ENCODE measurements at regions of chr9 and their contacts with region 1.

Region 1: GRCh38 chr9:35510745-35511428 is 21.0 kb downstream of the RUSC2 start:
- DNase-seq: peak; percentile 79 to 97
- ATAC-seq: peak; percentile 95 to 96
- H3K4me3 ChIP-seq: peak overlapping the region; percentile 8; the same call in 2 of the 3 replicates
- H3K27ac ChIP-seq: peak overlapping the region; percentile 95 to 96
- H3K4me1 ChIP-seq: peaks cover 78% of the 10 kb centered on the region
- CTCF ChIP-seq: peak; percentile 40
- EP300 ChIP-seq: peak; percentile 91 to 97; a peak in 4 of 5 replicates
- POLR2A ChIP-seq: no peak
- RAD21 ChIP-seq: peak; percentile 60 to 71

Region 2: DNA sequence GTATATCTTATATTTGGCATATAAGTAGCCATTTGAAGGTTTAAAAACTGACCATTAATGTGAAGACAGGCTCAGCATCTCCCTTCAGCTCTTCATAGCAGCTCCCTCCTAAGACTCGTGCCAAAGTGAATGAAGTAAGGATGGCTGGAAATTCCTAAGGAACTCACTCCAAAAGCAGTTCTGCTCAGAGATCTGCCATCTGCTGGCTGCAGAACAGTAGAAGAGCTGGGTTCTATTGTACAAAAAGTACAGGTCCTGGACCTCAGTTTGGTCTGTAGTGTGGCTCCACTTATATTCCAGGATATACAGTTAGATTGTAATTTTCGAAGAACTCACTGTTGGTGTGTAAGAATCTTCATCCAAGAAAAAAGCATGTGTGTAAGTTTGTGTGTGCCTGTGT is 125.8 kb before region 1 on chr9:
- CTCF ChIA-PET with region 1: no interaction called
- POLR2A ChIA-PET with region 1: no interaction called
- DNase-seq: peak in 1 of 2 experiments; percentile 9
- ATAC-seq: peak; percentile 47 to 56; a peak in 2 of 6 replicates
- H3K4me3 ChIP-seq: no peak overlapping the region
- H3K27ac ChIP-seq: no peak overlapping the region
- H3K4me1 ChIP-seq: no peaks in the 10 kb centered on the region
- CTCF ChIP-seq: 0 out of 3 replicates have a peak, but pooled peaks have one; percentile 9
- EP300 ChIP-seq: no peak
- POLR2A ChIP-seq: no peak
- RAD21 ChIP-seq: 0 out of 5 replicates have a peak, but pooled peaks of 1 of the 2 experiments have one; percentile 0

Region 3: GRCh38 chr9:35406183-35406956 is 104.5 kb before region 1 on chr9:
- CTCF ChIA-PET with region 1: no interaction called
- POLR2A ChIA-PET with region 1: no interaction called
- DNase-seq: no peak
- ATAC-seq: peak; percentile 27 to 33; a peak in 1 of 6 replicates
- H3K4me3 ChIP-seq: no peak overlapping the region
- H3K27ac ChIP-seq: no peak overlapping the region
- H3K4me1 ChIP-seq: no peaks in the 10 kb centered on the region
- CTCF ChIP-seq: no peak
- EP300 ChIP-seq: no peak
- POLR2A ChIP-seq: no peak
- RAD21 ChIP-seq: no peak

Region 4: DNA sequence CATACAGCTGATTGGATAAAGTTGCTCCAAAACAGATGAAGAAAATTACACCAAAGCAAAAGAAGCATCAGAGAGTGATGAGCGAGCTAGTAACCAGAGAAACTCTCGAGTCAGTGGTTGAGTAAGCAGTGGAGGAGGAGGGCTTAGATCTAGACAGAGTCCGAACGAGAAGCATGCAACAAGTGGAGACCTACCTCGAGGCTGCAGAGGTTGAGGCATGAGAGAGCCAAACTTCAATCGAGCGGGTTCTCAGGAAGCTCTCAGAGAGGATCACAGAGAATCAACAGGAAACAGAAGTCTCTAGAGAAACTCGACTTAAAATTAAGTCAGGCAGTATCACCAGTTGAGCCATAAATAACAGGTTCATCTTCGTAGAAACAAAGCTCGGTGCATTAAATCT is 14.9 kb before region 1 on chr9:
- CTCF ChIA-PET with region 1: interaction called, 23 read pairs
- POLR2A ChIA-PET with region 1: no interaction called
- DNase-seq: no peak
- ATAC-seq: no peak
- H3K4me3 ChIP-seq: no peak overlapping the region
- H3K27ac ChIP-seq: peak overlapping the region in 1 of 2 experiments; percentile 34; a peak in 1 of 6 replicates
- H3K4me1 ChIP-seq: peaks cover 11% of the 10 kb centered on the region; the same call in 2 of the 3 replicates
- CTCF ChIP-seq: no peak
- EP300 ChIP-seq: no peak
- POLR2A ChIP-seq: no peak
- RAD21 ChIP-seq: no peak

Region 5: DNA sequence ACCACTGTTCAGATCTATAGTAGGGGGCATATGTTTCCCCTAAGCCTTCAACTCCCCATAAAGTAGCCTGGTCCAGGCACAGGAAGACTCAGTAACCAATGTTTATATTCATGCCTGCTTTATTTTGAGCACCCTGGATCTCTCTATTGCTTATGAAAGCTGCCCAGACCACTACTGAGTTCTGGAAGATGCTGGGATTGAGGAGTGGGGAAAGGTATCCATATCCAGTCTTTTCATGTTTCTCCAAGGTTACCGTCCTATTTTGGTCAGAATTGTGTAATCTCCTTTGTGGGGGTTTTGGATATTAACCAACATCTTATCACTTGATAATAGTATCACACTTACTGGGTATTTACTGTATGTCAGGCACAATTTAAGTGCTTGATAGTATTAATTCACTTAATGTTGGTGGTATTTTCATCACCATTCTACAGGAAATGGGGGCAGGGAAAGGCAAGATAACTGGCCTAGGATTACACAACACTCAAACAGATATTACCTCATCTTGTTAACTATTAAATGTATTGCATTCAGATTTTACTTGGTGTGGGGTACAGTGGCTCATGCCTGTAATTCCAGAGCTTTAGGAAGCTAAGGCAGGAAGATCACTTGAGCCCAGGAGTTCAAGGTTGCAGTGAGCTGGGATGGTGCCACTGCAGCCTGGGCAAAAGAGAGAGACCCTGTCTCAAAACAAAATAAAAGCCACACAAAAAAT is 15.4 kb after region 1 on chr9:
- CTCF ChIA-PET with region 1: interaction called, 21 read pairs
- POLR2A ChIA-PET with region 1: interaction called, 5 read pairs
- DNase-seq: peak in 1 of 2 experiments; percentile 84
- ATAC-seq: peak; percentile 78 to 82
- H3K4me3 ChIP-seq: no peak overlapping the region; the same call in 2 of the 3 replicates
- H3K27ac ChIP-seq: peak overlapping the region; percentile 95 to 96
- H3K4me1 ChIP-seq: peaks cover 85% of the 10 kb centered on the region
- CTCF ChIP-seq: no peak
- EP300 ChIP-seq: peak; percentile 99 to 100
- POLR2A ChIP-seq: no peak
- RAD21 ChIP-seq: peak; percentile 8 to 37

Measured in A549 (cell line).